HCT116 (cell line): ENCODE measurements at regions of chr1 and their contacts with region 1.

Region 1: DNA sequence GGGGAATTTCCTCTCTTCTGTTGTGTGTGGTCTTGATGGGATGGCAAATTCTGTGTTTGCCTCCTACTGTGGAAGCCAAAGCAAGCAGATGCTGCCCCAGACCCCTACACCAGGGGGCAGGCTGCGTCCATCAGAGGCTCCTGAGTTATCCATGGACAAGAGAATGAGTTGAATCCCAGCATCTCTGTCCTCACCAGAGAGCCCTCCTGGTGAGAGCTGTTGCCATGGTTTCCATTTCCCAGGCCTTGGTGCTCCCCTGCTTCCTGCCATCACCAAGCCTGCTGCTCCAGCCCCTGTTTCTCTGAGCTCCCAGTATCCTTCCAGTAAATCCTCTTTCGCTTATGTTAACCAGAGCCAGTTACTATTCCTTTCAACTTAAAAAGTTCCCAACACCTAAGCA is 20.4 kb upstream of the GNG12 start:
- DNase-seq: peak; percentile 44
- ATAC-seq: peak; percentile 84
- H3K4me3 ChIP-seq: no peak overlapping the region
- H3K27ac ChIP-seq: no peak overlapping the region
- H3K4me1 ChIP-seq: peaks cover 10 to 14% of the 10 kb centered on the region in 2 experiments
- H3K27me3 ChIP-seq: no peaks in the 10 kb centered on the region; the same call in 1 of the 2 replicates
- CTCF ChIP-seq: peak; percentile 88 to 97 (median 89)
- POLR2A ChIP-seq: no peak
- RAD21 ChIP-seq: peak; percentile 98

Region 2: GRCh38 chr1:67766141-67766978 is 87.3 kb before region 1 on chr1:
- CTCF ChIA-PET with region 1: interaction called, 19 read pairs
- POLR2A ChIA-PET with region 1: no interaction called
- RAD21 ChIA-PET with region 1: interaction called in 1 of 2 experiments, 3 read pairs
- intact Hi-C with region 1: loop called (anchors 1 kb)
- DNase-seq: no peak
- ATAC-seq: peak; percentile 52; the same call in 1 of the 2 replicates
- H3K4me3 ChIP-seq: no peak overlapping the region
- H3K27ac ChIP-seq: no peak overlapping the region
- H3K4me1 ChIP-seq: no peaks in the 10 kb centered on the region
- H3K27me3 ChIP-seq: no peaks in the 10 kb centered on the region
- CTCF ChIP-seq: peak; percentile 60 to 88 (median 68)
- POLR2A ChIP-seq: no peak
- RAD21 ChIP-seq: peak; percentile 82

Region 3: DNA sequence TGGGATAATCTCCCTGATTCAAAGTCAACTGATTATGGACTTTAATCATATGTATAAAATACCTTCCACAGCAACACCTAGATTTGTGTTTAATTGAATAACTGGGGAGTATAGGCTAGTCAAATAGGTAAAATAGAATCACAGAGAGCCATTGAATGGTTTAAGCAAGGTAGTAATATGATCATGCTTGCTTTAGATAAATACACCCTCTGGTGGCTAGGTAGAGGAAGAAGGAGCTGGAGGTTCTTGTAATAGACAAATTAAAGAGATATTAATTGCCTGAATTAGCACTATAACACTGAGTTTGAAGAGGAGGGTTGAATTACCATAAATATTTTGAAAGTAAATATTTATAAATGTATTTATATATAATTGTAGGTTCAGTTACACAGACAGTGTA is 156.4 kb after region 1 on chr1:
- CTCF ChIA-PET with region 1: interaction called, 25 read pairs
- POLR2A ChIA-PET with region 1: no interaction called
- RAD21 ChIA-PET with region 1: interaction called, 3 to 9 read pairs
- intact Hi-C with region 1: loop called (anchors 1 kb)
- DNase-seq: peak; percentile 8
- ATAC-seq: peak; percentile 71
- H3K4me3 ChIP-seq: no peak overlapping the region
- H3K27ac ChIP-seq: no peak overlapping the region
- H3K4me1 ChIP-seq: no peaks in the 10 kb centered on the region
- H3K27me3 ChIP-seq: no peaks in the 10 kb centered on the region
- CTCF ChIP-seq: peak; percentile 35 to 73 (median 48); a peak in 4 of 6 replicates
- POLR2A ChIP-seq: no peak
- RAD21 ChIP-seq: peak; percentile 85

Region 4: DNA sequence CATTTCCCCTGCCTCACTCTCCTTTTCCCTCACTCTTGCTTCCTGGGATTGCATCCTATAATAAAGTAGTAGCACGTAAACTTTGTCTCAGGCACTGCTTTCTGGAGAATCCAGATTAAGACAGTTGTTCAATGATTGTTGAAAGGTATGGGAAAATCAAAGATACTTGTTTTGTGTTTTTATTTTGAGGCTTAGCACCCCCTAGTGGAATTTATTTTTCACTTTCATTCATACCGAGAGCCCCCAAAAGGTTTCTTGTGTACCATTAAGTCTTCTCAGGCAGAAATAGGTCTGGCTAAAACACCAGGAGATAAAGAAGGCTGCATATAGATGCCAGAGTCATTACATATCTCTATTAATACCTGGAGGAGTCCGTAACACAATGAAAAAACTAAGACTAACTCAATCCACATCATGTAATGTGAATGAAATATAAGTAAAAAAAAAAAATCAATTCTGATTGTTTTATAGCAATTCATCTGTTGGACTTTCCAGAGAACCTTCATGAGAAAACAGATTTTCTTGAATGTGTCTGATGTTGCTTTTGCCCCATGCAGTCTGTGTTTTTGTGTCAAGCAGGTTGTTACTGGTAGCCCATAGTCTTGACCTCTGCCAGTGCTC is 492.6 kb after region 1 on chr1:
- CTCF ChIA-PET with region 1: interaction called, 11 read pairs
- POLR2A ChIA-PET with region 1: no interaction called
- RAD21 ChIA-PET with region 1: no interaction called
- intact Hi-C with region 1: loop called (anchors 2 kb)
- DNase-seq: peak; percentile 45
- ATAC-seq: peak; percentile 42
- H3K4me3 ChIP-seq: no peak overlapping the region
- H3K27ac ChIP-seq: no peak overlapping the region
- H3K4me1 ChIP-seq: peaks cover 0 to 31% of the 10 kb centered on the region in 2 experiments; a peak in 3 of 4 replicates
- H3K27me3 ChIP-seq: no peaks in the 10 kb centered on the region
- CTCF ChIP-seq: peak; percentile 46 to 75 (median 57); a peak in 5 of 6 replicates
- POLR2A ChIP-seq: no peak
- RAD21 ChIP-seq: peak; percentile 57

Region 5: DNA sequence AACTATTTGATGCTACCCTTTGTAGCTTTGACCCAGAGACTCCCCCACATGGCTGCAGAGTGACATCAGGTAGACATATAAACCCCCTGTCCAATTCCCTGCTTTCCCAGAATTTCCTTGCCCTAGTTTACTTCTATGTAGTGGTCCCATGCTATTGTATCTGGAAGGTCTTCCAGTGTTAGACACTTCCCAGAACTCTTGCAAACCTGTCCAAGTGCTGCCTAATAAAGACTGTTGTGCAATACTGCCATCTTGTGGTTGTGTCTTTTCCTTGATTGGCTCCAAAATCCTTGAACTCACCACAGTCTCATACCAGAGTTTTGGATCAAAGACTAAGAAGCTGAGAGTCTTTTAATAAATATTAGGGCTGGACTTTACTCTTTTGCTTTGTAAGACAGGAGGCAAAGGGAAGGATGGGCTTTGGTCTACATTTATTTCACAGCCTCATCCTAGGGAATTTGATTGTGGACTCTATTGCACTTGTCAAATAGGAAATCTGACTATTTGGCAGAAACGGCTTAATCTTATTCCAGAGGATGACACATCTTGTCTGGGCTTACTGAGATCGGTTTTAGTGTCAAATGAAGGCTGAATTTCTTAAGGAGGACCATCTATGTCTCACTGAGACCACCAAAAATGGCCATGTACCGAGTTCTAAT is 1884.0 kb after region 1 on chr1:
- CTCF ChIA-PET with region 1: no interaction called
- POLR2A ChIA-PET with region 1: no interaction called
- RAD21 ChIA-PET with region 1: no interaction called
- intact Hi-C with region 1: loop called (anchors 2 kb)
- DNase-seq: peak; percentile 61
- ATAC-seq: peak; percentile 81
- H3K4me3 ChIP-seq: no peak overlapping the region
- H3K27ac ChIP-seq: no peak overlapping the region
- H3K4me1 ChIP-seq: no peaks in the 10 kb centered on the region
- H3K27me3 ChIP-seq: peaks cover 30% of the 10 kb centered on the region
- CTCF ChIP-seq: peak; percentile 46 to 78 (median 65); a peak in 5 of 6 replicates
- POLR2A ChIP-seq: no peak
- RAD21 ChIP-seq: peak; percentile 79